Naive thymus-derived CD4-positive, alpha-beta T cell (primary cell): ENCODE measurements at regions of chr6 and their contacts with region 1.

Region 1: DNA sequence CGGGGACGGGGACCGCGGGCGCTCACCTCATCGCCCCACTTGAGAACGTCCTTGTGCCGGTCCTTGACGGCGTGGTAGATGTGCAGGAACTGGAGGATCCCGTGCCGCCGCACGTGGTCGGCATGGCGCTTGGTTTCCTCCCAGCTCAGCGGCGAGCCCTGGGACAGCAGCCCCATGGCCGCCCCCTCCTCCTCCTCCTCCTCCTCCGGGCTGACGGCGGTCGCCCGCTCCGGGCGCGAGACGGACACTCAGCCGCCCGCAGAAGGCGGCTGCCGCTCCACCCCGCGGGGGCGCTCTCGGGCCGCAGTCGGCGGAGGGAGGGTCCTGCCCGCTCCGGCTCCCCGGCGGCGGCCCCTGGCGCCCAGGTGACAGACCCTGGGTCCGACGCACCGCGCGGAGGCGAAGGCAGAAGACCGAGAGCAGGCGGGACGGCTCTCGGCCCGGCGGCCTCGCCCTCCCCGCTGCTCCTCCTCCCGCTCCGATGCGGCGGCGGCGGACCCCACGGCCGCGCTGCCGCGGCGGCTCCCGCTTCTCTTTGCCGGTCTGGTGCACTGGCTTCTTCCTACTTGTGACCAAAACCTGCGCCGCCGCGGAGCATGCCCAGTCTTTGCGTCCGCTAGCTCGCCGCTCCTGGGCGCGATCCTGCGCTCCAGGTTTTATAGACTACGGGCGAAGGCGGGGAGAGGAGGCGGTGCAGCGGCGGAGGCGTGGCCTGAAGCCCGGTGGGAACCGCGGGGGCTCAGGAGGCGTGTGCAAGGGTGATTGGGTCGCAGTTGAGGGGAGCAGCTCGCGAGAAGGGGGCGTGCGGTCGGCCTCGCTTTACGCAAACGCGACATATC is at the start of gene GCLC:
- DNase-seq: peak; percentile 70 to 85 (median 81)
- ATAC-seq: peak; percentile 75
- H3K4me3 ChIP-seq: peak within 1 kb of the TSS; percentile 83
- H3K4me3 Mint-ChIP-seq: peak within 1 kb of the TSS; percentile 87 to 100 (median 96)
- H3K27ac ChIP-seq: peak within 1 kb of the TSS; percentile 67
- H3K27ac Mint-ChIP-seq: peak within 1 kb of the TSS; percentile 84 to 94 (median 91)
- H3K4me1 ChIP-seq: peaks cover 22 to 23% of the 10 kb centered on the region in 2 donors
- H3K4me1 Mint-ChIP-seq: peaks cover 29 to 80% (median 66%) of the 10 kb centered on the region in 7 donors
- H3K27me3 ChIP-seq: no peaks in the 10 kb centered on the region
- H3K27me3 Mint-ChIP-seq: peaks cover 0 to 21% (median 0%) of the 10 kb centered on the region in 5 donors
- total RNA-seq, gene GCLC: 18.5 to 37.5 (median 27.6) TPM

Region 2: DNA sequence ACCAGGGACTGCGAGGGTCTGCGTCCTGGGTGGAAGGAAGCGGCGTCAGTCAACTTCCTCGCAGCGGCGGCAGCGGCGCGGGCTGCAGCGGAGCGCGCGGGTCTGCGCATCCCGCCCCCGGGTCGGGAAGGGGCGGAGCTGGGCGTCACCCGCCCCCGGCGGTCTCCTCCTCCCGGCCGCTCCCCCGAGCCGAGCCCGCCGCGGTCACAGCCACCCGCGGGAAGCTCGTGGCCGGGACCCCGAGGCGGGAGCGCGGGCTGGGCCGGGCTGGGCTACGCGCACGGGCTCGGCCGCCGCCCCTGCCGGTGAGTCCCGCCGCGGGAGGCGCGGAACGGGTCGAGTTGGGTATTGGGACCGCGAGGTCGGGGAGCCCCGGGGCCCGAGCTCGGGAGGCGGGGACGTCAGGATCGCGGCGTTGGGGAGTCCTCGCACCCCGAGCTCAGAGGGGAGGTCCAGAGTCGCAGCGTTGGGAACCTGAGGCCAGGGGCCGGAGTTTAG is 1182.7 kb before region 1 on chr6 and contains the start of gene PAQR8:
- CTCF ChIA-PET with region 1: no interaction called
- POLR2A ChIA-PET with region 1: no interaction called
- intact Hi-C with region 1: loop called in 1 of 2 experiments (anchors 10 kb)
- DNase-seq: peak; percentile 77 to 89 (median 86)
- ATAC-seq: peak; percentile 95
- H3K4me3 ChIP-seq: peak within 1 kb of the TSS; percentile 90
- H3K4me3 Mint-ChIP-seq: peak within 1 kb of the TSS; percentile 83 to 100 (median 98)
- H3K27ac ChIP-seq: peak within 1 kb of the TSS; percentile 86
- H3K27ac Mint-ChIP-seq: peak within 1 kb of the TSS; percentile 90 to 99 (median 94)
- H3K4me1 ChIP-seq: peaks cover 25 to 28% of the 10 kb centered on the region in 2 donors
- H3K4me1 Mint-ChIP-seq: peaks cover 25 to 55% (median 45%) of the 10 kb centered on the region in 7 donors
- H3K27me3 ChIP-seq: no peaks in the 10 kb centered on the region
- H3K27me3 Mint-ChIP-seq: peaks cover 0 to 9% (median 0%) of the 10 kb centered on the region in 5 donors
- total RNA-seq, gene PAQR8: 7.5 to 46.2 (median 21.6) TPM

Region 3: DNA sequence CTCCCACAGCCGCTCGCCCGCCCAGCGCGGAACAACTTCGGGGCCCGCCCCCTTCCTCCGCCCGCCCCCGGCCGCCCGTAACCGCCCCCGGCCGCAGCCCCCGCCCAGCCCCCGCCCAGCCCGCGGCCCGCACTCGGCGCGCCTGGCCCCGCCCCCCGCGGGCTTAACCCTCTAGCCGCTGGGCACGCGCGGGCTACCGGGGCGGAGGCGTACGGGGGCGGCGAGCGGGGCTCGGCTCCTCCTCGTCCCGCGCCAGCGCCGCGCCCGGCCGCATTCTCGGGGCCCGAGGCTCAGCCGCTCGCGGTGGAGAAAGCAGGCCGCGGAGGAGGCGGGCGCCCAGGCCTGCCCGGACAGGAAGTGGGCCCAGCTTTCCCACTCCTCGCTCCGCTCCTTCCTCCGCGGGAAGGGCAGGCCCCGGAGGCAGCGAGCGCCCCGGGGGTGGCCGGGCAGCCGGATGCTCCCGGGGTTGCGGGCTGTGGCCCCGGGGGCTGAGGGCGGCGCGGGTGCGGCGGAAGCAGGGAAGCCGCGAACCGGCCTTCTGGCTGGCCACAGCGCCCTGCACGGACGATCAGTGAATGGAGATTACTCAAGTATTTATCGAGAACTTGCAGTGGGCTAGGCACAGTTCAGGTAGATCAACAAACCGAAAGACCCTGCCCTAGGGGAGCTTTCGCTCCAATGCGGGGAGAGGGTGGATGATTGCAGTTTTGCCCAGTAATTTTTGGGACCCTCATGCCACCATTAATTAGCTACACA is 967.5 kb before region 1 on chr6 and contains the start of gene TRAM2:
- CTCF ChIA-PET with region 1: no interaction called
- POLR2A ChIA-PET with region 1: no interaction called
- intact Hi-C with region 1: loop called (anchors 1 to 5 kb)
- DNase-seq: peak; percentile 67 to 86 (median 79)
- ATAC-seq: peak; percentile 90
- H3K4me3 ChIP-seq: peak within 1 kb of the TSS; percentile 76
- H3K4me3 Mint-ChIP-seq: peak within 1 kb of the TSS; percentile 83 to 95 (median 88)
- H3K27ac ChIP-seq: peak within 1 kb of the TSS; percentile 80
- H3K27ac Mint-ChIP-seq: peak within 1 kb of the TSS; percentile 72 to 93 (median 89)
- H3K4me1 ChIP-seq: peaks cover 27 to 34% of the 10 kb centered on the region in 2 donors
- H3K4me1 Mint-ChIP-seq: peaks cover 35 to 60% (median 49%) of the 10 kb centered on the region in 7 donors
- H3K27me3 ChIP-seq: no peaks in the 10 kb centered on the region
- H3K27me3 Mint-ChIP-seq: peaks cover 0 to 20% (median 0%) of the 10 kb centered on the region in 5 donors
- total RNA-seq, gene TRAM2: 8.9 to 10.9 (median 10.3) TPM

Region 4: DNA sequence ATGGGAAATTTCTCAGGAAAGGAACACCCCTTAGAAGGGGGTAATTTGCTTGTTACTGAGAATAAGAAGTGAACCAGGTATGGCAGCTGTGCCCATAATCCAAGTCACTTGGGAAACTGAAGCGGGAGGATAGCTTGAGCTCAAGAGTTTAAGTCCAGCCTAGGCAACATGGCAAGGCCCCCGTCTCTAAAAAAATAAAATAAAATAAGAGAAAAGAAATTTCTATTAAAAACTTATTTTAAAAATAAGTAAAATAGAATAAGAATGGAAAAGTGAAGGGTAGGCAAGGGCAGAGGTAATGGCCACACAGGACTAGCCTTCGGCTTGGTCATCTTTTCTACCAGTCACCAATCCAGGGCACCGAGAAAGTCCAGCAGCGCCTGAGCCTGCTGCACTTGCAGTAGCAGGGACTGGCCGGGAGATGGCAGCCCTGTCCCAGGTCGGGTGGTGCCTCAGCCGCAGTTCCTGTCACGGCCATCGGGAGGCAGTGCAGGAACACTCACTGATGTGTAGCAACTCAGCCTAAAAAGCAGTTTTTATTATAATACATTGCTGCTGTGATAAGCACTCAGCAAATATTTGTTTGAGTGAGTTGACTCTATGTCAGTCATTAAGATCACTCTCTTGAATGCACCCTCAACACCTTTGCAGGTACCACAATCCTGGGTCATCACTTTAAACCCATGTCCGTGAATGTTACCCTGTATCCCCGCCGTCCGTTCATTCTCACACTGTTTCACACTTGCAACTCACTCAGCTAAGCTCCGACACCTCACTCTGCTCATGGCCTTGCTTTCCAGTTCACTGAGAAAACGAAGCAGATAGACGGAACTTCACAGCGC is 372.9 kb before region 1 on chr6:
- CTCF ChIA-PET with region 1: no interaction called
- POLR2A ChIA-PET with region 1: no interaction called
- intact Hi-C with region 1: loop called in 1 of 2 experiments (anchors 5 kb)
- DNase-seq: peak; percentile 76 to 95 (median 87)
- ATAC-seq: peak; percentile 100
- H3K4me3 ChIP-seq: no peak overlapping the region
- H3K4me3 Mint-ChIP-seq: no peak overlapping the region
- H3K27ac ChIP-seq: no peak overlapping the region
- H3K27ac Mint-ChIP-seq: no peak overlapping the region
- H3K4me1 ChIP-seq: no peaks in the 10 kb centered on the region
- H3K4me1 Mint-ChIP-seq: peaks cover 0 to 6% (median 0%) of the 10 kb centered on the region in 7 donors
- H3K27me3 ChIP-seq: no peaks in the 10 kb centered on the region
- H3K27me3 Mint-ChIP-seq: peaks cover 0 to 3% (median 0%) of the 10 kb centered on the region in 5 donors

Region 5: DNA sequence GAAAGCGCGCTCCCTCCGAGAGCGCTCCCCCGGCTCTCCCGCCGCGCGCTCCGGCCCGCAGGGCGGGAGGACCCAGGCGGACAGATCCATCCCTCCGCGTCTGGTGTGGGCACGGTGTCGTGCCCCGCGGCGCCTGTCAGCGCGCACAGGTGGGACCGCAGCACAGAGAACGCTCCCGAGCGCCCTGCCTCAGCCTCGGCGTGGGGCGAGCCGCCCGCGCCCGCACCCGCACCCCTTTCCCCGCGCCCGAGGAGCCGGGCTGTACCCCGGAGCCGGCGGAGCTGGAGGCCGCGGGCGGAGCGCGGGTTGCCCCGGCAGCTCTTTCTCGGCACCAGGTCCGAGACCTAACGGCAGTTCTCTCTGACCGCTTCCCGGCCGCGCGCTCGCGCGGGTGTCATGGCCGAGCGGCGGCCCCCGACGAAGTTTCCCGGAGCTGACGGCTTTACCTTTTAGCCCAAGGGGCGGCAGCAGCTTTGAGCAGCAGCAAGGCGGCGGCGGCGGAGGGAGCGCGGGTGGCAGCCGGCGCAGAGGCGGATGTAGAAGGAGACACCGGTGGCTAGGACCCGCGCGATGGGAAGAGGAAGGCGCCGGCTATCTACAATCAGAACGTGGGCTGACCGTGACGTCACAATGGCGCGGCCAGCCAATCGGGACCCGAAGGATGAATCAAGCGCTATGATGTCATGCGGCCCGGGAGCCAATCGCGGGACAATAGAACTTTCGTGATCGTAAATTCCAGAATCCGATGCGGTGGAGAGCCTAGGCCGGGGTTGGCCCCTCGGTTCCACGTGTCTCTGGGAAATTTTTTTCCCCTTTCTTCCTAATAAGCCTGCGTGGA is 196.1 kb before region 1 on chr6 and contains the start of gene ELOVL5:
- CTCF ChIA-PET with region 1: no interaction called
- POLR2A ChIA-PET with region 1: no interaction called
- intact Hi-C with region 1: loop called (anchors 5 kb)
- DNase-seq: peak; percentile 78 to 97 (median 87)
- ATAC-seq: peak; percentile 87
- H3K4me3 ChIP-seq: peak within 1 kb of the TSS; percentile 65
- H3K4me3 Mint-ChIP-seq: peak within 1 kb of the TSS; percentile 91 to 100 (median 98)
- H3K27ac ChIP-seq: peak within 1 kb of the TSS; percentile 89
- H3K27ac Mint-ChIP-seq: peak within 1 kb of the TSS; percentile 85 to 99 (median 96)
- H3K4me1 ChIP-seq: peaks cover 23 to 30% of the 10 kb centered on the region in 2 donors
- H3K4me1 Mint-ChIP-seq: peaks cover 34 to 48% (median 46%) of the 10 kb centered on the region in 7 donors
- H3K27me3 ChIP-seq: no peaks in the 10 kb centered on the region
- H3K27me3 Mint-ChIP-seq: peaks cover 0 to 18% (median 0%) of the 10 kb centered on the region in 5 donors
- total RNA-seq, gene ELOVL5: 49.7 to 124 (median 71.3) TPM

Region 6: DNA sequence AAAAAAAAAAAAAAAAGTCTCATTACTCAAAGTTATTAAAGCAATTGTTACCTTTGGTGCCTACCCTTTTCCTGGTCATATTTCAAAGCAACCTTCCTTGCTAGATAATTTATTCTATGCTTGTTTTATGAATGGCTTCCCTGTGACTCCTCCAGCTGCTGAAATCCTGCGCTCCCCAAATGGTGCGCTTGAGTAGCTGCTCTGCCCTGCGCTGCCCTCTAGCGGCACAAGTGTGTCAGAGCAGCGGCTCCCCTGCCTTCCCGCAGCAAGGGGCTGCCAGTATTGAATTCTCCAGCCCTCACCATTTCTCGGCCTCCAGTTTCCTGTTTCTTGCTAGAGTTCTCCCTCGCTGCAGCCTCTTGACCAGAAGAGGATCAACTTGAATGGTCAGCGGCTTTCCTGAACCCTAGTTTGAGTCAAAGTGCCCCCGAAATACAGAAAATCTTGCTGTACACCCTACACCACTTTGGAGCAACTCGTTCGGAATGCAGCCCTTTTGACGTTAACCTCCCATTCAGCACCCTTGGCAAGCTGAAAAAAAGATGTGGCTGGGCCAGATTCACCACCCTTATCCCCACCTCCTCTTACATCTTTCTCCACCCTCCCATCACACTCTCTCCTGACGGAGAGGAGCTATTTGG is 181.2 kb after region 1 on chr6:
- CTCF ChIA-PET with region 1: no interaction called
- POLR2A ChIA-PET with region 1: no interaction called
- intact Hi-C with region 1: loop called (anchors 2 to 5 kb)
- DNase-seq: peak; percentile 46 to 79 (median 63)
- ATAC-seq: peak; percentile 95
- H3K4me3 ChIP-seq: no peak overlapping the region
- H3K4me3 Mint-ChIP-seq: peak overlapping the region in 1 of 10 donors; percentile 59
- H3K27ac ChIP-seq: no peak overlapping the region
- H3K27ac Mint-ChIP-seq: peak overlapping the region in 1 of 9 donors; percentile 63
- H3K4me1 ChIP-seq: no peaks in the 10 kb centered on the region
- H3K4me1 Mint-ChIP-seq: peaks cover 0 to 14% (median 4%) of the 10 kb centered on the region in 7 donors
- H3K27me3 ChIP-seq: no peaks in the 10 kb centered on the region
- H3K27me3 Mint-ChIP-seq: peaks cover 15 to 24% (median 22%) of the 10 kb centered on the region in 5 donors